ENCODE measurements at regions of chr17 and their contacts with region 1.

Region 1: DNA sequence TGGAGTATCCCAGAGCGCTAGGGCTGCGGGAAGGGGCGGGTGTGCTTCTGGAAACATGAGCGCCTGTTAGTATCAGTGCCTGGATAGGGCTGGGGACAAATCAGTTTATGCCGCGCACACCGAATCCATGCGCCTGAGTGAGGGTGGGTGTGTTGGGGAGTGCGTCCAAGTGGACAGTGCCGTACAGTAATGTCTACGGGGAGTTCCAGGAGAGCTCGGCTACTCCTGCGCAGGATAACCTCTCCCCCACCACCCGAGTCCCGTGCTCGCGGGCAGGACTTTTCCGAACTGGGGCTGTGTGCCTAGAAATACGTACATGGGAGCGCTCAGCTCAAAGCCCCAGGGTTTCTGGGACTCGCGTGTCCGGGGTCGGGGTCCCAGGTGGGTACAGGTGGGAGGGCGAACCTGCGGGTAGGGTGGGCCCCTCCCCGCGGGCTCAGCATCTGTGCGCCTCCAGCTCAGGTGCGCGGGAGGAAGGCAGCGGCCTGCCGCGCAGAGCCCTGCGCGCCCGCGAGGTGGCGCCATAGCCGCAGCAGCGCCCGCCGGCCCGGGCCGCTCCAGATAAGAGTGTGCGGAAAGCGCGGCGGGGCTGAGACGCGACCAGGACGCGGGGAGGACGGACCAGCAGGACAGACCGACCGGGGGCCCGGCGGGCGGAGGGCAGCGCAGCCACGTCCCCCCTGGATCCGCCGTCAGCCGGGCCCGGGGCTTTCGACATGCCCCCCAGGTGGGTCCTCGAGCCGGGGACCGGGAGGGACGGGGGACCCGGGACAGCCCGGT is at the start of gene HIC1:
- DNase-seq: peak; percentile 85
- ATAC-seq: peak; percentile 39
- H3K4me3 Mint-ChIP-seq: peak within 1 kb of the TSS; percentile 69
- H3K27ac Mint-ChIP-seq: no peak within 1 kb of the TSS
- H3K4me1 Mint-ChIP-seq: peaks cover 36% of the 10 kb centered on the region
- H3K27me3 Mint-ChIP-seq: peaks cover 11% of the 10 kb centered on the region
- CTCF ChIP-seq: peak; percentile 71
- total RNA-seq, gene HIC1: 8.3 and 9.3 TPM in 2 replicates

Region 2: GRCh38 chr17:1566545-1567199 is 488.0 kb before region 1 on chr17:
- CTCF ChIA-PET with region 1: no interaction called
- POLR2A ChIA-PET with region 1: no interaction called
- intact Hi-C with region 1: no loop called
- DNase-seq: no peak
- ATAC-seq: peak; percentile 50
- H3K4me3 Mint-ChIP-seq: peak overlapping the region; percentile 75
- H3K27ac Mint-ChIP-seq: peak overlapping the region; percentile 84
- H3K4me1 Mint-ChIP-seq: peaks cover 26% of the 10 kb centered on the region
- H3K27me3 Mint-ChIP-seq: no peaks in the 10 kb centered on the region
- CTCF ChIP-seq: no peak

Region 3: DNA sequence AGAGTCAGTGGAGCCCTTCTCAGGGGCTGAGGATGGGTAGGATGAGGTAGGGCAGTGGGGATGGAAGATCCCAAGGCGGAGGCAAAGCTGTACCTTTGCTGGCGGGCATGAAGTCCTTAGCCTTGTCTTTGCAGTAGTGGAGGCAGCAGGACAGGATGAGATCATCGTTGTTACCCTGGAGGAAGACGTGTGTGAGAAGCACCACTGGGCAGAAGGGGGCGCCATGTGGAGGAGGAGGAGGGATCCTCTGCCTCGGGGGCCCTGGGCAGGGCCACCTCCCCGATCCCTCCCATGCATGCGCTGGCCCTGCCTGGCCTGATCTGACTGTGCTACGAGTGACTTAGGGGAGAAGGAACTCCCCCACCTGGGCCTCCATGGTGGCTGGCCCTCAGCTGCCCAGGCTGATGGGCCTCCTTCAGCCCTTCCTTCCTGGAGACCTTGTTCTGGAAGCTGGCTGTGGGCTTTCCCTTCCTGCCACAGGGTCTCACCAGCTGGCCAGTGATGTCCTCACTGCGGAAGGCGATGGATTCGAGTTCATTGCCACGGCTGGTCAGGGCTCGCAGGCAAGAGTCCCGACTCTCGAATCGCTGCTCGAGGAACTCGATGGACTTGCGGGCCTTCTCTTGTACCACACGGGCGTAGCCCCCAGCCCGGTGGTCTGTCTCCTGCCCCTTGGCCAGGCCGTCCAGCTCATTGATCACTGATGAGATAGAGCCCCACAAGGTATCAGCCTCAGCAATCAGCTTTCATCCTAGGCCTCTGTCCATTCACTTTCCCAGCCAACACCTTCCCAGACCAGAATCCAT is 10.5 kb after region 1 on chr17:
- CTCF ChIA-PET with region 1: interaction called, 21 read pairs
- POLR2A ChIA-PET with region 1: interaction called, 7 read pairs
- intact Hi-C with region 1: loop called (anchors 1 kb)
- DNase-seq: no peak
- ATAC-seq: no peak
- H3K4me3 Mint-ChIP-seq: peak overlapping the region; percentile 67
- H3K27ac Mint-ChIP-seq: peak overlapping the region; percentile 16
- H3K4me1 Mint-ChIP-seq: peaks cover 46% of the 10 kb centered on the region
- H3K27me3 Mint-ChIP-seq: no peaks in the 10 kb centered on the region
- CTCF ChIP-seq: no peak

Region 4: DNA sequence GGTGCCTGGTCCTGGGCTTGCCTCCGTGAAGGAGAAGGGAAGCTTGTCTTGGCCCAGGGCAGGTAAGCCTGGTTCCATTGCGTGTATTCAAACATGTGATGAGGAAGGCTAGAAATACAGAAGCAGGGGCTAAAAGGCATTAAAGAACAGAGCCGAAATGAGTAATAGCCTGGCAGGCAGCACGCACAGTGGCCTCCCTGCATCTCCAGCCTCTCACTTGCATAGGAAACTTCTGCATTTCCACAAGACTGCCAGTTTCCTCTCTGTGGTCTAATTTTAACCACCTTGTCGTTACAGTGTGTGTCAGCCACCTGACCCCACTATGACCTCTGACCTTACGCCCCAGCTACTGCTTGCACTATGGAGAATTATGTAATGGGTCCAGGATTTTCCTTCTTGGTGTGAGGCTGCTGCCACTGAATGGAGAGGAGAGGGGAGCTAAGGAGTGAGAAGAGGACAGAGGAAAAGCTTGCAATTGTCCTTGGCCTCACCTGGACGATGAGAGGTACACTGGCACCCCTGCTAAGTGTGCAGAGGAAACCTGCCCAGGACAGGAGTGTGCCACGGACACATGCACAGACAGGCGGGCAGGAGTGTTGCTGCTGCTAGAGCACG is 33.0 kb after region 1 on chr17:
- CTCF ChIA-PET with region 1: interaction called, 98 read pairs
- POLR2A ChIA-PET with region 1: interaction called, 449 read pairs
- intact Hi-C with region 1: loop called (anchors 1 kb)
- DNase-seq: peak; percentile 48
- ATAC-seq: peak; percentile 63
- H3K4me3 Mint-ChIP-seq: peak overlapping the region; percentile 60
- H3K27ac Mint-ChIP-seq: peak overlapping the region; percentile 72
- H3K4me1 Mint-ChIP-seq: peaks cover 80% of the 10 kb centered on the region
- H3K27me3 Mint-ChIP-seq: no peaks in the 10 kb centered on the region
- CTCF ChIP-seq: no peak

Region 5: DNA sequence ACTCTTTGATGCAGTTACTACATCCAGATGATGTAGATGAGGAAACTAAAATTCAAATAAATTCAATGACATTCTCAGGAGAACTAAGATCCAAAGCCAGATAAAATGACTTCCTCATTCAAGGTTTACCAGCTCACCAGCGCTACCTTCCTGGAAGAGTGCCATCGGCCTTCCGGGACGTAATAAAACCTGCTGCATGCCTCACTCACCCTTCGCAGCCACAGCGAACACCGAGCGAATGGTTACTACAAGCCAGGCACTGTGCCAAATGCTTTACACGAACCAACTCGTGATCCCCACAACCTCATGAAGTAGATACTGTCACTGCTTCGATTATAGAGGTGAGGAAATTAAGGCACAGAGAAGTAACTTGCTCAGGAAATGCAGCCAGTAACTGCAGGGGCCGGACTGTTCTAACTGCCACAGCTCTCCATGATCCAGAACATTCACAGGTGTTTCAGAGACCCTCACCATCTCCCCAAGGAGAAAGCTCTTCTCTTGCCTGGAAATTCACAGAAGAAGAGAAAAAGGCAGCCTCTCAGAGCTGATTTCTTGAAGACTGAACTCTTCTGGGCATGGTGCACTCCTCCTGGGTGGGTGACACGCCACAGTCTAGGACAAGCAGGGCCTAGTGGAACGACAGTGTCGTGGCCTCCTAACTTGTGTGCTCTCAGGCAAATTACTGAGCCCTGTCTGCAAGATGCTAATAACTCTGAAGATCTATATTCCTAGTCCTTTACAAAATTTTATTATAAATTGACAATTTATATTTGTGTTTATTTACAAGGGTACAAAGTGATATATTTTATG is 47.0 kb after region 1 on chr17:
- CTCF ChIA-PET with region 1: interaction called, 3 read pairs
- POLR2A ChIA-PET with region 1: no interaction called
- intact Hi-C with region 1: loop called (anchors 5 kb)
- DNase-seq: no peak
- ATAC-seq: peak; percentile 69
- H3K4me3 Mint-ChIP-seq: no peak overlapping the region
- H3K27ac Mint-ChIP-seq: peak overlapping the region; percentile 14
- H3K4me1 Mint-ChIP-seq: peaks cover 12% of the 10 kb centered on the region
- H3K27me3 Mint-ChIP-seq: no peaks in the 10 kb centered on the region
- CTCF ChIP-seq: no peak

Region 6: DNA sequence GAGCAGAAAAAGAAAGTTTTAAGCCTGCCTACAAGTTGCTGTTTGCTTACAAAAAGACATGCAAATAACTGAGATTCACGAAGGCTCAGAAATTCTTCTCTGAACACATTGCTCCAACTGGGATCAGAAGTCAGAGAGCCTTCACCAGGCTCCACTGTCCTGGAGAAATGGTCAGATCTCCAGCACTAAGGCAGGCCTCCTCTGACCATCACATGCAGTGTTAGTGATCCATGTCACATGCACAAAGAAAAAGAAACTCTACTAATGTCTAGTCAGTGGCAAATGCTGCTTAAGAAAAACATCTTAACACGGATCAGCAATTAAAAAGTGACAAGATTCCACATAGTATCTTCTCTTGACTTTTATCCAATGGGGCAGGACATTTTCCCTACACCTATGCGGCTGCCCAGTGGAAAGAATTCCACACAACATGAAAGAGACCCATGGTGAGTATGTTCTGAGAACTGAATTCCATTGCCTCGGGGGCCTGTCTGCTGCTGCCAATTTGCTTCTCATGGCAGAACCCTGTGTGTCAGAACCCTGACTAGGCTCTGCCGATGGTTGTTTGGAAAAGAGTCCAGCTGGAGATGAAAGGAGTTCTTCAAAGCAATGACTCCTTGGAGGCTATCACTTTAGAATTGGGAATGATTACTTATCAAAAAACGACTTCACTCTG is 96.8 kb after region 1 on chr17:
- CTCF ChIA-PET with region 1: no interaction called
- POLR2A ChIA-PET with region 1: no interaction called
- intact Hi-C with region 1: no loop called
- DNase-seq: no peak
- ATAC-seq: no peak
- H3K4me3 Mint-ChIP-seq: no peak overlapping the region
- H3K27ac Mint-ChIP-seq: no peak overlapping the region
- H3K4me1 Mint-ChIP-seq: peaks cover 5% of the 10 kb centered on the region
- H3K27me3 Mint-ChIP-seq: no peaks in the 10 kb centered on the region
- CTCF ChIP-seq: no peak

Region 7: DNA sequence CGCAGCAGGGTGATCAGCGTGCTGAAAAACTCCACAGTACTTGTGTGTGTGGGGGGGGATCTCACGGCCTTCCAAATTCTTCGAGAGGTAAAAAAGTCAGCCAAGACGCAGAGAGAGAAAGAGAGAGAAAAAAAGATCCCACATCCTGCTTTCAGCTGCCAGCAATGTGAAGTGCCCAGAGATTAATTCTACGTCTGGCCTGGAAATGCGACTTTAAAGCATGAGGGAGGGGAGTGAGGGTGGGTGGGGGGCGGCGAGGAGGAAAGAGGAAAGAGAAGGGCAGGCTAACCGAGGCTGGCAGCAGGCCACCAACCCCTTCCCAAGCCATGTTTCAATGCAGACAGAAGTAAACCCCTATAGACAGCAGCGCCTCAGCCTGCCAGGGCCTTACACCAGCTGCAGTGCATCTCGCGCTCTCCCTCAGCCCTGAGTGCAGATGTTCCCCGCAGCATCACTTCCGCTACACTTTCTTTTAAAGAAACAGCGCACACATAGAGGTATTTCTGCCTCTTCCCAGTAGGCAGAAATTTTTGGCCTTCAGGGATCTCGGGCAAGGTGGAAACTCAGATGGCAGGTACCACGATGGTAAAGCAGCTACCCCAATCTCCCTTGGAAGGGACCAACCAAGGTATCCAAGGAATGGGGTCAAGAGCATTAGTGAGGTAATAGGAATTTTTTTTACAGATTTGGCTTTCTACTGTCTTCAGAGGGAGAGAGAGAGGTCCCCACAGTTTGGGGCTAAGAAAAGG is 161.1 kb after region 1 on chr17:
- CTCF ChIA-PET with region 1: interaction called, 4 read pairs
- POLR2A ChIA-PET with region 1: interaction called, 10 read pairs
- intact Hi-C with region 1: no loop called
- DNase-seq: peak; percentile 33
- ATAC-seq: peak; percentile 97
- H3K4me3 Mint-ChIP-seq: peak overlapping the region; percentile 76
- H3K27ac Mint-ChIP-seq: peak overlapping the region; percentile 92
- H3K4me1 Mint-ChIP-seq: peaks cover 31% of the 10 kb centered on the region
- H3K27me3 Mint-ChIP-seq: no peaks in the 10 kb centered on the region
- CTCF ChIP-seq: no peak

Region 8: GRCh38 chr17:2282297-2282873 is 227.7 kb after region 1 on chr17:
- CTCF ChIA-PET with region 1: interaction called, 14 read pairs
- POLR2A ChIA-PET with region 1: interaction called, 4 read pairs
- intact Hi-C with region 1: loop called (anchors 1 kb)
- DNase-seq: no peak
- ATAC-seq: peak; percentile 66
- H3K4me3 Mint-ChIP-seq: no peak overlapping the region
- H3K27ac Mint-ChIP-seq: no peak overlapping the region
- H3K4me1 Mint-ChIP-seq: no peaks in the 10 kb centered on the region
- H3K27me3 Mint-ChIP-seq: no peaks in the 10 kb centered on the region
- CTCF ChIP-seq: no peak

Region 9: GRCh38 chr17:2401426-2402221 is 346.9 kb after region 1 on chr17:
- CTCF ChIA-PET with region 1: no interaction called
- POLR2A ChIA-PET with region 1: no interaction called
- intact Hi-C with region 1: loop called (anchors 5 kb)
- DNase-seq: peak; percentile 99
- ATAC-seq: peak; percentile 58
- H3K4me3 Mint-ChIP-seq: peak overlapping the region; percentile 94
- H3K27ac Mint-ChIP-seq: peak overlapping the region; percentile 99
- H3K4me1 Mint-ChIP-seq: peaks cover 39% of the 10 kb centered on the region
- H3K27me3 Mint-ChIP-seq: no peaks in the 10 kb centered on the region
- CTCF ChIP-seq: no peak

Measured in activated B cell treated with CpG ODN at 0.5 μM for 24 hours (primary cell).